ENCODE measurements at regions of chr2 and their contacts with region 1.

Region 1: GRCh38 chr2:237242091-237242536 is 156.4 kb downstream of the COPS8 start:
- DNase-seq: no peak
- H3K4me3 Mint-ChIP-seq: no peak overlapping the region
- H3K27ac Mint-ChIP-seq: no peak overlapping the region
- H3K4me1 Mint-ChIP-seq: peaks cover 35% of the 10 kb centered on the region
- H3K27me3 Mint-ChIP-seq: no peaks in the 10 kb centered on the region
- CTCF ChIP-seq: no peak

Region 2: GRCh38 chr2:236946871-236947270 is 295.2 kb before region 1 on chr2:
- CTCF ChIA-PET with region 1: no interaction called
- intact Hi-C with region 1: no loop called
- DNase-seq: no peak
- H3K4me3 Mint-ChIP-seq: no peak overlapping the region
- H3K27ac Mint-ChIP-seq: no peak overlapping the region
- H3K4me1 Mint-ChIP-seq: no peaks in the 10 kb centered on the region
- H3K27me3 Mint-ChIP-seq: peaks cover 15% of the 10 kb centered on the region
- CTCF ChIP-seq: no peak

Region 3: GRCh38 chr2:237406371-237406895 is 164.3 kb after region 1 on chr2:
- CTCF ChIA-PET with region 1: interaction called, 11 read pairs
- intact Hi-C with region 1: no loop called
- DNase-seq: no peak
- H3K4me3 Mint-ChIP-seq: no peak overlapping the region
- H3K27ac Mint-ChIP-seq: no peak overlapping the region
- H3K4me1 Mint-ChIP-seq: no peaks in the 10 kb centered on the region
- H3K27me3 Mint-ChIP-seq: peaks cover 82% of the 10 kb centered on the region
- CTCF ChIP-seq: no peak

Region 4: GRCh38 chr2:237421542-237422116 is 179.5 kb after region 1 on chr2:
- CTCF ChIA-PET with region 1: no interaction called
- intact Hi-C with region 1: no loop called
- DNase-seq: peak; percentile 82
- H3K4me3 Mint-ChIP-seq: peak overlapping the region; percentile 31
- H3K27ac Mint-ChIP-seq: no peak overlapping the region
- H3K4me1 Mint-ChIP-seq: peaks cover 19% of the 10 kb centered on the region
- H3K27me3 Mint-ChIP-seq: peaks cover 92% of the 10 kb centered on the region
- CTCF ChIP-seq: peak; percentile 60

Measured in Calu3 (cell line).